Common myeloid progenitor, CD34-positive (primary cell): ENCODE measurements at regions of chr6 and their contacts with region 1.

Region 1: GRCh38 chr6:41775293-41776181 is 4.2 kb downstream of the FRS3 start:
- DNase-seq: peak; percentile 78 to 88 (median 86)
- H3K4me3 ChIP-seq: no peak overlapping the region
- H3K27ac ChIP-seq: no peak overlapping the region
- H3K4me1 ChIP-seq: peaks cover 17 to 32% (median 31%) of the 10 kb centered on the region in 4 experiments
- H3K27me3 ChIP-seq: no peaks in the 10 kb centered on the region

Region 2: DNA sequence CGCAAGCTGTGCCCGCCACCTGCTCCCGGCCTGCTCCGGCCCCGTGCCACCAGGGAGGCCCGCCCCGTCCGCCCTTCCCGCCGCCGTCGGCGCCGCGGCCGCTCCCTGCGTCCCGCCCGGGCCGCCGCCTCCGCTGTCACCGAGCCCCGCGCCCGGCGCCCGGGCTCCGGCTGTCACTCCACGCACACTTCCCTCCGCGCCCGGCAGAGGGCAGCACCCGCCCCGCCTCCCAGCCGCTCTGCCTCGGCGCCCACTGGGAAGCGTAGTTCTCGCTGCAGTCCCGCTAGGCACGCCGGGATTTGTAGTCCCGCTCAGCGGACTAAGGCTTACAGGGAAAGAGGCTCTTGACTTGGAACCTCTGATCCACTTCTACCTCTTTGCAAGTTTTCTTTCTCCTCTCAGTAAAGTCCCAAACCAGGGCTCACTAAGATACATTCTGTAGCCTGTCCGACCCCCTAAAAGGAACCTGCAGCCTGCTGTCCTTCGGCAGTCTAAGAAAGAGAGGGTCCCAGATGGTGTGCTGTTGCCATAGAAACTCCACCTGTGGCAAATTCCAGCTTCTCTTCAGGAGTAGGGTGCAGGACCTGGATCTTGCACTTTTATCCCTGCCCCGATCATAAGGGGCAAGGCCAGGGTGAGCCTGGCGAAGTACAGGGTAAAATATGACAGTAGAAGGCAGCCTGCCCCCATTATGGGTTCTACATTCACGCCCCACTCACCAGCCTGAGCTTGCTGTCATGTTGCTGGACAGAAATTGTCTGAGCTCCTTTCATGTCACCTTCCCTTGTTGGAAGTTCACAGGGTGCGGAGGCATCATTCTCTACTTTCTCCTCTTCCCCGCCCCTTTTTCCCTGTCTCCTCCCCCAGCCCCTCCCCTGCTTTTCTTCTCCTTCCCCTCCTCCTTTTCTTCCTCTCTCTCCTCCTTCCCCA is 39.8 kb before region 1 on chr6 and contains the start of gene TFEB:
- CTCF ChIA-PET with region 1: interaction called, 68 read pairs
- POLR2A ChIA-PET with region 1: no interaction called
- DNase-seq: peak; percentile 89 to 93 (median 92)
- H3K4me3 ChIP-seq: peak within 1 kb of the TSS; percentile 56 to 85 (median 69)
- H3K27ac ChIP-seq: no peak within 1 kb of the TSS
- H3K4me1 ChIP-seq: peaks cover 0 to 38% (median 22%) of the 10 kb centered on the region in 4 experiments
- H3K27me3 ChIP-seq: no peaks in the 10 kb centered on the region

Region 3: DNA sequence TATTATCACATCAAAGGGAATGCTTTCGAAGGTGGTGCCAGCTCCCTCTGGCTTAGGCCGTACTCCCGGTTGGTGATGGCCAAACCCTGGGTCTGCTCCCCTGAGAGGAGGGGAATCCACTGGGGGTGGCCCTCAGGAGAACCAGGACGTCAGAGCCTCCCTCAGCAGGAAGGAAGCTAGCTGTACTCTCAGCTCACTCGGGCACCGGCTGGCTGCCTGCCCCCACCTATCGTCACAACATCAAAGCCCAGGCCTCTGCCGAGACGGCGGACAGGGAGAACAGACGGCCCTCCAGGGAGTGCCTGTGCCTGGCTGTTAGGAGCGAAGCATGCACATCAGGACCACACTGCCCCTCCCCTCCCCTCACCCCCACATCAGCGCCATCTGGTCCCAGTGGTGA is 19.2 kb before region 1 on chr6:
- CTCF ChIA-PET with region 1: interaction called, 11 read pairs
- POLR2A ChIA-PET with region 1: no interaction called
- DNase-seq: no peak
- H3K4me3 ChIP-seq: no peak overlapping the region
- H3K27ac ChIP-seq: no peak overlapping the region
- H3K4me1 ChIP-seq: peaks cover 0 to 6% (median 2%) of the 10 kb centered on the region in 4 experiments
- H3K27me3 ChIP-seq: peaks cover 0 to 4% (median 0%) of the 10 kb centered on the region in 5 experiments